ENCODE measurements at regions of chr10 and their contacts with region 1.

Region 1: DNA sequence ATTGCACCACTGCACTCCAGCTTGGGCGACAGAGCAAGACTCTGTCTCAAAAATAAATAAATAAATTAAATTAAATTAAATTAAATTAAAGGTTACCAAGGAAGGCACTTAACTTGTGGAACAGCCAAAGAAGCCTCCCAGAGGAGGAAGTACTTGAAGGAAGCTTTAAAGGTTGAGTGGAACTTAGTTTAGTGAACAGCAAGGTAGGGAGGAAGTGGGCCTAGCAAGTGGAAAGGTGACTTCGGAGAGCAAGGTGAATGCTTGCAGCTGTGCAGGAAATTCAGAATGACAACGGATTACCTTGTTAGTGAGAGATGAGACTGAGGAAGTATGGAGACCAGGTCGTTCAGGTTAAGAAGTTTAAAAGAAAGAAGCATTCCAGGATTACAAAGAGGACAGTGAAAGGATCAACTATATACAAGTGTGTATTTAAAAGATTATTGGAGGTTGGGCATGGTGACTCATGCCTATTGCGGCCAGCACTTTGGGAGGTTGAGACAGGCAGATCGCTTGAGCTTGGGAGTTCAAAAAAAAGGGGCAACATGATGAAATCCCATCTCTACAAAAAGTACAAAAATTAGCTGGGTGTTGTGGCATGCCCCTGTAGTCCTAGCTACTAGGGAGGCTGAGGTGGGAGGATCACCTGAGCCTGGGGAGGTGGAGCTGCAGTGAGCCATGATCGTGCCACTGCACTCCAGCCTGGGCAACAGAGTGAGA is 12.8 kb upstream of the RPEL1 start:
- DNase-seq: peak in 1 of 2 donors; percentile 11
- H3K4me3 ChIP-seq: no peak overlapping the region
- H3K27ac ChIP-seq: peak overlapping the region in 1 of 5 donors; percentile 73
- H3K4me1 ChIP-seq: peaks cover 7 to 45% (median 13%) of the 10 kb centered on the region in 4 donors
- H3K27me3 ChIP-seq: no peaks in the 10 kb centered on the region
- CTCF ChIP-seq: no peak
- EP300 ChIP-seq: no peak
- POLR2A ChIP-seq: no peak

Region 2: GRCh38 chr10:103215601-103216000 is 17.3 kb before region 1 on chr10:
- intact Hi-C with region 1: loop called (anchors 2 kb)
- DNase-seq: no peak
- H3K4me3 ChIP-seq: no peak overlapping the region
- H3K27ac ChIP-seq: no peak overlapping the region
- H3K4me1 ChIP-seq: no peaks in the 10 kb centered on the region
- H3K27me3 ChIP-seq: no peaks in the 10 kb centered on the region
- CTCF ChIP-seq: no peak
- EP300 ChIP-seq: no peak
- POLR2A ChIP-seq: no peak